PC-9 (cell line): ENCODE measurements at regions of chr15 and their contacts with region 1.

Region 1: GRCh38 chr15:59299929-59300617 is 72.6 kb downstream of the MYO1E start:
- DNase-seq: peak; percentile 75 to 93
- H3K4me3 ChIP-seq: no peak overlapping the region
- H3K27ac ChIP-seq: peak overlapping the region; percentile 97
- H3K4me1 ChIP-seq: peaks cover 99% of the 10 kb centered on the region
- H3K27me3 ChIP-seq: no peaks in the 10 kb centered on the region
- CTCF ChIP-seq: no peak

Region 2: DNA sequence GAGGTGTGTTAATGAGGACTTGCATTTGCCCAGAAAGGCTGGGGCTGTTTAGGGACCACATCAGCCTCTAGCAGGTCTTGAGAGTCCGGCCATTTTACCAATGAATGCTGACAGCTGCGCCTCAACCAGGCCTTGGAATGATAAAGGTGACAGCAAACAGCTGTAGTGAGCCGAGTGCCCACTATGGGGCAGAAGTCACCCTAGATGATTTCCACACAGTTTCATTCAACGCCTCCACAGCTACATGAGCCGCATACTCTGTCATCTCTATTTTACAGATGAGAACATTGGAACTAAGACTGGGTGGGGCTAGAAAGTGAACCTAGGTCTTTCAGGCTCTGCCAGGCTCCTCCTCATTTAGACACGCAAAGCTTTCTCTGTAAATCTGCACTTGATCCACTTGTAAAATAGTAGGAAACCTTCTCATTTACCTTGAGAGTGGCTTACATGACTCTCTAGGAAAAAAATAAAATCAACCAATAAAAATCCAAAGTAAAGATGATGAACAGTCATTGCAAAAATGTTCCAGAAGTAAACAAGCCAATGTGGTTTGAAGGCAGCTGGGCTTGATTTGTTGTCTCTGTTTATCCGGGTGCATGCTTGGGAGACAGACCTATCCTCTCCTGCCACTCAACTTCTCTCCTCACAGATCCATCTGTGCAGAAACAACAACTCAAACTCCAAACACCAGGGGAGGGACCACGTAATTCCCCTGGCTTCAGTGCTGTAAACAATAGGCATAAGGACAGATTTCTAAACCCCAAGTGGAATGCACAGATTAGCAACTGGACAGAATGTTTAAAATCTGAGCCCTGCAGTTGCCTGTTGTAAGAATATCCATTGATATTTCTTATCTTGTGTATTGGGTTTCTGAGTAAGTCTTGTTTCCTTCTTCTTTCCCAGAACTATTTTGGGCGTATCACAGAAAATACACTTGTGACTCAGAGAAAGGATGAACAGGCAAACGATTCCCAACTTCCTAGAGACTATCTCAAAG is 124.9 kb before region 1 on chr15:
- CTCF ChIA-PET with region 1: interaction called, 6 read pairs
- POLR2A ChIA-PET with region 1: interaction called, 9 read pairs
- intact Hi-C with region 1: loop called (anchors 2 kb)
- DNase-seq: peak; percentile 24 to 40
- H3K4me3 ChIP-seq: no peak overlapping the region
- H3K27ac ChIP-seq: peak overlapping the region; percentile 70
- H3K4me1 ChIP-seq: peaks cover 20% of the 10 kb centered on the region
- H3K27me3 ChIP-seq: no peaks in the 10 kb centered on the region
- CTCF ChIP-seq: peak; percentile 55

Region 3: GRCh38 chr15:59268168-59268979 is 31.7 kb before region 1 on chr15:
- CTCF ChIA-PET with region 1: no interaction called
- POLR2A ChIA-PET with region 1: interaction called, 19 read pairs
- intact Hi-C with region 1: no loop called
- DNase-seq: peak in 1 of 2 experiments; percentile 55
- H3K4me3 ChIP-seq: peak overlapping the region; percentile 24; the same call in 1 of the 2 replicates
- H3K27ac ChIP-seq: peak overlapping the region; percentile 89
- H3K4me1 ChIP-seq: peaks cover 37% of the 10 kb centered on the region
- H3K27me3 ChIP-seq: no peaks in the 10 kb centered on the region
- CTCF ChIP-seq: no peak

Region 4: GRCh38 chr15:59283717-59284336 is 16.2 kb before region 1 on chr15:
- CTCF ChIA-PET with region 1: interaction called, 3 read pairs
- POLR2A ChIA-PET with region 1: interaction called, 16 read pairs
- intact Hi-C with region 1: loop called (anchors 1 kb)
- DNase-seq: peak; percentile 97 to 98
- H3K4me3 ChIP-seq: peak overlapping the region; percentile 21; the same call in 1 of the 2 replicates
- H3K27ac ChIP-seq: peak overlapping the region; percentile 97
- H3K4me1 ChIP-seq: peaks cover 76% of the 10 kb centered on the region
- H3K27me3 ChIP-seq: no peaks in the 10 kb centered on the region
- CTCF ChIP-seq: no peak